ENCODE measurements at regions of chr3 and their contacts with region 1.

Region 1: DNA sequence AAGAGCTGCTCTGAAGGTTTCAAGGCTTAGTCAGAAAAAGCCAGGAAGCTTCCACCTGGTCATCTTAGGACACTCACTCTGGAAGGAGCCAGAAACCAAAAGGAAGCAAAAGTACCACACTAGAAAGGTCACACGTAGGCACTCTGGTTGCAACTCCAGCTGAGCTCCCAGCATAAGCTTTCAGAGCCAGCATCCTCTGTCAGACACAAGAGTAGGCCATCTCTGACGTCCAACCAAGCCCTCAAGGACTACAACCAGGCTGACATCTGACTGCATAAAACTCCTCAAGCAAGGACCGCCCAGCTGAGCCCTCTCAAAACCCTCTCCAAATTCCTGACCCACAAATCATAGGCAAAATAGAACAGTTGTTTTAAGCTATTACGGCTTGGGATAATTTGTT is 12.8 kb downstream of the SH3BP5 start:
- DNase-seq: peak; percentile 34
- H3K4me3 ChIP-seq: no peak overlapping the region
- H3K27ac ChIP-seq: peak overlapping the region; percentile 14
- H3K4me1 ChIP-seq: peaks cover 34% of the 10 kb centered on the region
- H3K27me3 ChIP-seq: no peaks in the 10 kb centered on the region
- CTCF ChIP-seq: no peak

Region 2: GRCh38 chr3:14660907-14661306 is 658.7 kb before region 1 on chr3:
- CTCF ChIA-PET with region 1: no interaction called
- dilution Hi-C with region 1: no loop called
- in situ Hi-C with region 1: no loop called
- intact Hi-C with region 1: no loop called
- DNase-seq: no peak
- H3K4me3 ChIP-seq: no peak overlapping the region
- H3K27ac ChIP-seq: no peak overlapping the region
- H3K4me1 ChIP-seq: no peaks in the 10 kb centered on the region
- H3K27me3 ChIP-seq: no peaks in the 10 kb centered on the region
- CTCF ChIP-seq: no peak

Region 3: DNA sequence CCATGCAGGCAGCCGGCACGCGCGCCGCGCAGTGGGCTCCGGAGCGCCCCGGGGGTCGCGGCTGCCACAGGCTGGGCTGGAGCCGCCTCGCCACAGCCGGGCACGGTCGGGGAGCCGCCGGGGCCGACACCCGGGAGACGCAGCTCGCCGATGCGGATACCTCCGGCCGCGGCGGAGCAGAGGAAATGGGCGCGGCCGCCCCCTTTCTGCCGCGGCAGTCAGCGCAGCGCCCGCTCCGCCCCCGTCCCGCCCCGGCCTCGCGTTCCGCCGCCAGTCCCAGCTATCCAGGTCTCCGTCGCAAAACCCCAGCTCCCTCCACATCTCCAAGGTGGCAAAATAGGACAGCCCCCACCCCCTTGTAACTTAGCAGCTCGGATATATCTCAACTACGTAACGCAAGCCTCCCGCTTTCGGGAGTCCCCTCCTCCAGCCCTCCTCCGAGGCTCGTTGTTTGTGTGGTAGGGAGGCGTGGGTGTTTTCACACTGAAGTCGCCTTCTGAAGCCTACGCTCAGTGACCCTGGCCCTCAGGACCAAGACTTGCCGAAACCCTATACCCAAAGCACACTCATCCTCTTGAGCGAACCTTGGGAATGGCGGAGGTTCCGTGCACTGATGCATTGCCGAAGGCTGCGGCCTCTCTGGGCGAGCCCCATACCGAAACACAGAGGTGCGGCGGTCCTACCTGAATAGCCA is 13.0 kb after region 1 on chr3 and contains the start of gene SH3BP5:
- CTCF ChIA-PET with region 1: interaction called, 5 read pairs
- dilution Hi-C with region 1: no loop called
- in situ Hi-C with region 1: no loop called
- intact Hi-C with region 1: loop called (anchors 2 kb)
- DNase-seq: peak; percentile 68
- H3K4me3 ChIP-seq: peak within 1 kb of the TSS; percentile 84 to 91 (median 89)
- H3K27ac ChIP-seq: peak within 1 kb of the TSS; percentile 34
- H3K4me1 ChIP-seq: peaks cover 19% of the 10 kb centered on the region
- H3K27me3 ChIP-seq: no peaks in the 10 kb centered on the region
- CTCF ChIP-seq: peak; percentile 22 to 64
- total RNA-seq, gene SH3BP5: 15.4 to 21.0 TPM

Region 4: DNA sequence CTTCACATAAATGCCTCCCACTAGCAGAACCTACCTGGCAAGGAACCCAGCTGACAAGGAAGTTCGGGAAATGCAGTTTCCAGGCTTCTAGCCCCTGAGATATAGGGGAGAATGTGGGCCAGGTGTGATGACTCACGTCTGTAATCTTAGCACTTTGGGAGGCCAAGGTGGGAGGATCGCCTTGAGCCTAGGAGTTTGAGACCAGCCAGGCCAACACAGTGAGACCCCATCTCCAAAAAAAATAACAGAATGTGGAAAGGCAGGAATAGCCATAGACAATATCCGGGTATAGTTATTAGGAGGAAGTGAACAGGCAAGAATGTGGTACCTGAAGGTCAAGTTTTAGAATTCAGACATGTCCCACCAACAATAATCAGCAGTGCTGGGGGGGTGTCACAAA is 53.3 kb after region 1 on chr3:
- CTCF ChIA-PET with region 1: no interaction called
- dilution Hi-C with region 1: loop called (anchors 5 kb)
- in situ Hi-C with region 1: no loop called
- intact Hi-C with region 1: no loop called
- DNase-seq: no peak
- H3K4me3 ChIP-seq: no peak overlapping the region
- H3K27ac ChIP-seq: no peak overlapping the region
- H3K4me1 ChIP-seq: no peaks in the 10 kb centered on the region
- H3K27me3 ChIP-seq: no peaks in the 10 kb centered on the region
- CTCF ChIP-seq: no peak

Region 5: GRCh38 chr3:15726043-15726442 is 406.5 kb after region 1 on chr3:
- CTCF ChIA-PET with region 1: no interaction called
- dilution Hi-C with region 1: no loop called
- in situ Hi-C with region 1: no loop called
- intact Hi-C with region 1: no loop called
- DNase-seq: peak; percentile 46
- H3K4me3 ChIP-seq: no peak overlapping the region
- H3K27ac ChIP-seq: peak overlapping the region; percentile 59
- H3K4me1 ChIP-seq: peaks cover 17% of the 10 kb centered on the region
- H3K27me3 ChIP-seq: no peaks in the 10 kb centered on the region
- CTCF ChIP-seq: no peak

Measured in mammary epithelial cell (primary cell).